Activated B cell treated with CpG ODN at 0.5 μM for 24 hours (primary cell): ENCODE measurements at regions of chr3 and their contacts with region 1.

Region 1: DNA sequence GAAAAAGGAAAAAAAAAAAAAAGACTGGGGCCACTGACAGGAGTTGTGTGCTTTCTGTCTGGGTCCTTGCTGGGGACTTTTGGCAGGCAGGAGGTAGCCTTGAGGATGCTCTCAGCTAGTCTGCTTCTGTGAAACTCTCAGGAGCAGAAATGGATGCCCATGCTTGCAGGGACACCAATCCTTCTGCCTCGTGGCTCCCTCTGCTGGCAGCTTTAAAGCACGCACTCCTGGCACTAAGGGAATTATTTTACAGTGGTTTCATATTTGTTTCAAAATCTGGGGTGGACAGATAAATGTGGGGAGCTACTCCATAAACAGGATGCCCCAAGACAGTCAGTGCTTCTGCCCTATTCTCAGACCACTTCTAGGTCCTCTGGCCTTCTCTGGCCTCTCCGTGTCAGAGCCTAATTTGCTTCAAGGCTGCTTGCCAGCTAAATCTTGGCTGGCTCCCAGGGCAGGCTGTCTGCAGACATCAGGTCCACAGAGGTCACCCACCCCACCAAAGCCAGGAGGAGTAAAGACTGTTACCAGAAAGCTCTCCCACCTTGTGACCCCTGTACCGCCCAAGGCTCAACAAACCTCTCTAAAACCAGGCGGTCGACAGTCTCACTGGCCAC is 17.1 kb downstream of the TRAIP start:
- DNase-seq: peak; percentile 65
- ATAC-seq: peak; percentile 97
- H3K4me3 Mint-ChIP-seq: no peak overlapping the region
- H3K27ac Mint-ChIP-seq: peak overlapping the region; percentile 24
- H3K4me1 Mint-ChIP-seq: peaks cover 5% of the 10 kb centered on the region
- H3K27me3 Mint-ChIP-seq: no peaks in the 10 kb centered on the region
- CTCF ChIP-seq: peak; percentile 17

Region 2: DNA sequence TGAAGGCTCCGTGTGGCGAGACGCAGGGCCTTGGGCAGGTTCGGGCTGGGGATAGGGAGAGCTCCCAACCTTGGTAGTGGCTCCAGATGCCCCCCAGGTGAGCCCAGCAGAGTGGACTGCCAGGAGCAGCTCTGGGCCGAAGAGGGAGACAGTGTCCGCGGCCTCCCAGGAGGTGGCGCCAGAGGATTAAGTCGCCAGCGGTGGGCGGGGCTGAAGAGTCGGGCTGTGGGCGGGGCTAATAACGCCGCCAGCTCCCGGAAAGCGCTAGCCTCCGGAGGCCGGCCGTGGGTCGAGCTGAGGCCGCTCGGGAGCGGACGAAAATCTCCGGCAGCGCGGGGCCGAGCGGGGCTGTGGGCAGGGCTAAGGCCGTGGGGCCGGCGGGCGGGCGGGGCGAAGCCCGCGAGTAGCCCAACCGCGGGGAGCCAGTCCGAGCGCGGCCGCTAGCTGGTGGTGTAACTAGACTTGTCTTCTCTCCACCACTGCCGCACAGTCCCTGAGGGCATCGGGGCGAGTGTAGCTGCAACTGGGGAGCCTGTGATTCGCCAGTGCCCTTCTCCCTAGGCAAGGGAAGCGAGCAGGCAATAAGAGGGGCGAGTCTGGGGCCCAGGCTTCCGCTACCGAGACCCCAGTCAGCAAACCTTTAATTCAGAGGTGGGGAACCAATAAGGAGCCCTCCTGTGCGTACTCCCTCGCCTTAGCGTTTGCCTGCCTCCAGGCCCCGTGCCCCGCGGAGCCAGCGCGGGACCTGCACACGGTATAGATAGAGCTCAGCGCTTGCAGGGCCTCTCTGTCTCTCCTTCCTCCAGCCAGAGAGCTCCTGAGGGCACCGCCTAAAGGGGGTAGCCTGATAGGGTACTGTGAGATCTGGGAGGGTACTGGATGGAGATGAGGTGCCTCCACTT is 299.4 kb before region 1 on chr3:
- CTCF ChIA-PET with region 1: interaction called, 27 read pairs
- POLR2A ChIA-PET with region 1: interaction called, 5 read pairs
- intact Hi-C with region 1: no loop called
- DNase-seq: peak; percentile 93
- ATAC-seq: peak; percentile 92
- H3K4me3 Mint-ChIP-seq: peak overlapping the region; percentile 79
- H3K27ac Mint-ChIP-seq: peak overlapping the region; percentile 46
- H3K4me1 Mint-ChIP-seq: peaks cover 9% of the 10 kb centered on the region
- H3K27me3 Mint-ChIP-seq: peaks cover 11% of the 10 kb centered on the region
- CTCF ChIP-seq: no peak

Region 3: DNA sequence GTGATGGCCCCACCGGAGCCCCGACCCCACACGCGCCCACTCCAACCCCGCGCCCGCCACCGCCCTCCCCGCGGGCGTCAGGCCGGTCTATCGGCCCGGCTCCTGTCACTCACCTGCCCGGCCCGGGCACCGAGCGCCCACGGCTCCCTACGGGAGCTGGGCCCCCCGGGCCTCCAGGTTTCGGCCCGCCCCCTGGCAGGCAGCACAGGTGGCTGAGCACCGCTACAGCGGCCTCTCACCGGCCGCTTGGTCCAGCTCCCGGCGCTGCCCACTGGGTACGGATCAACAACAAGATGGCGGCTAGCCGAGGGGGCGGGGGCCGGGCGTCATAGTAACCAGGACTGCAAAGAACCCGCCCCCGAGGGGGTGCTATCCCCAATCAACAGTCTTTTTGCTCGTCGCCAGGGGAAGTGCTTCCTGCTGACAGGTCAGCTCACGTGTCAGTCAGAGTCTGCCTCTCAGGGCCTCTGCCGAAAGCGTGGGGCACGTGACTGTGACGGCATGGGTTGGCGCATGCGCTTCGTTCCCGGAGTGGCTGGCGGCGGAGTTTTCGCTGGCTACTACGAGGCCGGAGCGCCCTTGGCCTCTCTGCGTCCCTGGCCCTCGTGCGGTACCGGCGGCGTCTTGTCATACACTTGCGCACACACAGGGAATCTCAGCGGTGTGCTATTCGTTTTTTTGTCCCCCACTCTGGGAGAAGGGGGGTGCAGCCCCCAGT is 52.9 kb before region 1 on chr3 and contains the start of gene IP6K1:
- CTCF ChIA-PET with region 1: interaction called, 5 read pairs
- POLR2A ChIA-PET with region 1: interaction called, 7 read pairs
- intact Hi-C with region 1: loop called (anchors 10 kb)
- DNase-seq: peak; percentile 97
- ATAC-seq: peak; percentile 99
- H3K4me3 Mint-ChIP-seq: peak within 1 kb of the TSS; percentile 91
- H3K27ac Mint-ChIP-seq: peak within 1 kb of the TSS; percentile 93
- H3K4me1 Mint-ChIP-seq: peaks cover 32% of the 10 kb centered on the region
- H3K27me3 Mint-ChIP-seq: no peaks in the 10 kb centered on the region
- CTCF ChIP-seq: no peak
- total RNA-seq, gene IP6K1: 44.3 and 47.6 TPM in 2 replicates

Region 4: DNA sequence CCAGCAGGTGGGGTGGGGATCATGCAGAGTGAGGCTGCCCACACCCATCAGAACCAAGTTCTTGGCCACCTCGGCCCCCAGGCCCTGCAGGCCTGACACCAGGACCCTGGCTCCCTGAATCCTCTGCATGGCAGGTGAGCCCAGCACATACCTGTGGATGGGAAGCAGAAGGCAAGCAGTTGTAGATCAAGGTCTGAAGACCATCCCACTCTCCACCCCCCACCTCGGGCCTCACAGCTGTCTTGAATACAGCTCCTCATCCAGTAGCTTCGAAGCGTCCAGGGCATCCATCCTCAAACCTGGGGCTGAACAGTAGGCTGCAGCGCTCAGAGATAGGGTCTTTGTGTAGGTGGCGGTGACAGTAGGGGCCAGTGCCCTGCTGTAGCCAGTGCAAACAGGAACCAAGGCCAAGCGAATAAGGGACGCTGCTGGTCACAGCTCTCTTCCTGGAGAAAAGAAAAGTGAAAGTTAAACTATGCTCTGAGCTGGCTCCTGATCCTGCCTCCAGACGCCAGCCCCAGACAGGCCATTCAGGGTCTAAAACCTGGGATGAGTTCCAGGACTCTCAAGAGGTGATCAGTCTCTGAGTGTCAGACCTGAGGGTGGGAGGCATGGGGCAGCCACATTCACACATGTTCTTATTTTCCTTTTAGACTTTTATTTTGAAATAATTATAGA is 25.7 kb before region 1 on chr3 and contains the start of gene UBA7:
- CTCF ChIA-PET with region 1: interaction called, 238 read pairs
- POLR2A ChIA-PET with region 1: interaction called, 9 read pairs
- intact Hi-C with region 1: no loop called
- DNase-seq: peak; percentile 35
- ATAC-seq: peak; percentile 90
- H3K4me3 Mint-ChIP-seq: peak within 1 kb of the TSS; percentile 94
- H3K27ac Mint-ChIP-seq: peak within 1 kb of the TSS; percentile 97
- H3K4me1 Mint-ChIP-seq: peaks cover 51% of the 10 kb centered on the region
- H3K27me3 Mint-ChIP-seq: no peaks in the 10 kb centered on the region
- CTCF ChIP-seq: no peak
- total RNA-seq, gene UBA7: 216 and 237 TPM in 2 replicates

Region 5: DNA sequence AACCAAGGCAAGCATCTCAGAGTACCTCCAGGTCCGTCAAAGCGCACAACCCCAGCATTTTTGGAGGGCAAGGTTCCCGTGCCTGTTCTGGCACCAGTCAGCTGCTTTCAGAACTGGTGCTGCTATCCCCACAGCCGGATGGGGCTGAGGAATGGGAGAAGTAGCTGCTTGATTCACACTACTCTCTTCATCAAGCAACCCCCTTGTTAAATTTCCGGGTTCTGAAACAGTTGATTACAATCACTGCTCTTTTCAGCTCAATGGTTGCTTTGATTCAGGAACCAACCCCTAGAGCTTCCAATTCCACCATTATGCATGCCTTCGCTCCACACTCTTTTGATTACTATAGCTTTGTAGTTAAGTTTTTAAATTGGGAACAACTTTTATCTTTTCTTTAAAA is 13.3 kb before region 1 on chr3:
- CTCF ChIA-PET with region 1: interaction called, 12 read pairs
- POLR2A ChIA-PET with region 1: no interaction called
- intact Hi-C with region 1: no loop called
- DNase-seq: no peak
- ATAC-seq: no peak
- H3K4me3 Mint-ChIP-seq: no peak overlapping the region
- H3K27ac Mint-ChIP-seq: no peak overlapping the region
- H3K4me1 Mint-ChIP-seq: no peaks in the 10 kb centered on the region
- H3K27me3 Mint-ChIP-seq: no peaks in the 10 kb centered on the region
- CTCF ChIP-seq: no peak